PC-9 (cell line): ENCODE measurements at regions of chr4 and their contacts with region 1.

Region 1: GRCh38 chr4:111641955-111642579 is 503.2 kb upstream of the FAM241A start:
- DNase-seq: peak; percentile 68 to 84
- H3K4me3 ChIP-seq: no peak overlapping the region
- H3K27ac ChIP-seq: no peak overlapping the region
- H3K4me1 ChIP-seq: no peaks in the 10 kb centered on the region; the same call in 1 of the 2 replicates
- H3K27me3 ChIP-seq: no peaks in the 10 kb centered on the region
- CTCF ChIP-seq: peak; percentile 84

Region 2: DNA sequence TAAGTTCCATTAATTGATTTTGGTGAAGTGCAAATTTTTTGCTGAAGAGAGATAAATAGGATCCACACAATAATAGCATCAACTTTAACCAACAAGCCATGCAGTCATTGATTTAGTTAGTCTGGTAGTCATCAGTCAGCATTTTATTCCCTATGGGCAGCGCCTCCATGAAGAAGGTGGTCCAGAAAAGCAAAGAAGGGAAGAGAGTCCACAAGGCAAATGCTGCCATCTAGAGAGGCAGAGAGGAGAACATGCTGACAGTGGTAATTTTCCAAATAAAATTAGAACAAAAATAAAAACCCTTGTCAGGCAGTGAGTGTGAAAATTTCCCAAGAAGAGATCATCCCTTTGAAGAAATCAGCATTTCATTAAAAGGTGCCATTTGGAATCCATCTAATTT is 136.5 kb after region 1 on chr4:
- CTCF ChIA-PET with region 1: no interaction called
- POLR2A ChIA-PET with region 1: no interaction called
- intact Hi-C with region 1: loop called (anchors 5 kb)
- DNase-seq: no peak
- H3K4me3 ChIP-seq: no peak overlapping the region
- H3K27ac ChIP-seq: no peak overlapping the region
- H3K4me1 ChIP-seq: peaks cover 18% of the 10 kb centered on the region
- H3K27me3 ChIP-seq: no peaks in the 10 kb centered on the region
- CTCF ChIP-seq: no peak; the same call in 1 of the 2 replicates

Region 3: GRCh38 chr4:111854494-111855087 is 212.5 kb after region 1 on chr4:
- CTCF ChIA-PET with region 1: interaction called, 3 read pairs
- POLR2A ChIA-PET with region 1: interaction called, 3 read pairs
- intact Hi-C with region 1: loop called (anchors 1 kb)
- DNase-seq: peak; percentile 2 to 39
- H3K4me3 ChIP-seq: no peak overlapping the region
- H3K27ac ChIP-seq: no peak overlapping the region
- H3K4me1 ChIP-seq: no peaks in the 10 kb centered on the region
- H3K27me3 ChIP-seq: no peaks in the 10 kb centered on the region
- CTCF ChIP-seq: peak; percentile 87

Region 4: DNA sequence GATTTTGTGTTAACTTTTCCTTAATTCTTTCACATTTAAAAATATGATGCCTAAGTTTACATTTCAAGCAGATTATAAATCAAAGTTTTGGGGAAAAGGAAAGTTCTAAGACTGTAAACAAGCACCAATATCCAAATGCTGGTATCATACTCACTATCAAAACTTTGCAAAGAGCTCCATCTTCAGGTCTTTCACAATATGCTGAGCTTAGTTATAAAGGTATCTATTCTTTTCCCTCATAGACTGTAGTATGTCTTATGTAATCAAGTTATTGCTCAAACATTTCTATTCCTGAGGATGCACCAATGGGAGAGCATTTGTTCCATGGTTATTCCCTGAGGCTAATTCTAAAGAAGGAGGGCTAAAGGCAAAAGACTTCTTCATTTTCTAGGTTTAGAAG is 295.3 kb after region 1 on chr4:
- CTCF ChIA-PET with region 1: no interaction called
- POLR2A ChIA-PET with region 1: no interaction called
- intact Hi-C with region 1: loop called (anchors 1 kb)
- DNase-seq: peak in 1 of 2 experiments; percentile 64
- H3K4me3 ChIP-seq: no peak overlapping the region
- H3K27ac ChIP-seq: no peak overlapping the region
- H3K4me1 ChIP-seq: no peaks in the 10 kb centered on the region
- H3K27me3 ChIP-seq: no peaks in the 10 kb centered on the region
- CTCF ChIP-seq: peak; percentile 62

Region 5: DNA sequence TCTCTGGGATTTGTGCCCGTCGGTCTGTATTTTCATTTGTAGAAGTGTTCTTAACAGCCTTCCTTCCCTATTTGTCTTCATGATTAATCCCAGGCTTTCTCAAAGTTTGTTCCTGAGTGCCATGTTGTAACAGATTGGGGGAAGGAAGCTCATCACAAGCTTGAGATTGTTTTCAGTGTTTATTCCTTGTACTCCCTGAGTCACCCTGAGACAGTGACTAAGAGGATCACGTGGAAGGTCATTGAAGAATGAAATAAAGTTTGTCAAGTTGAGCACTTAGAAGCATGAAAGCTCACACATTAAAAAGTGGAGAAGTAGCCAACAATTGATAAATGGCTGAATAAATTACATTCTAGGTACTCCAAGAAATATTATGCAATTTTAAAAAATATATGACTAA is 349.7 kb after region 1 on chr4:
- CTCF ChIA-PET with region 1: no interaction called
- POLR2A ChIA-PET with region 1: no interaction called
- intact Hi-C with region 1: no loop called
- DNase-seq: no peak
- H3K4me3 ChIP-seq: no peak overlapping the region
- H3K27ac ChIP-seq: no peak overlapping the region
- H3K4me1 ChIP-seq: peaks cover 7% of the 10 kb centered on the region; the same call in 1 of the 2 replicates
- H3K27me3 ChIP-seq: peaks cover 5% of the 10 kb centered on the region; the same call in 1 of the 2 replicates
- CTCF ChIP-seq: no peak

Region 6: GRCh38 chr4:112060212-112060611 is 418.1 kb after region 1 on chr4:
- CTCF ChIA-PET with region 1: no interaction called
- POLR2A ChIA-PET with region 1: interaction called, 3 read pairs
- intact Hi-C with region 1: loop called (anchors 1 kb)
- DNase-seq: peak in 1 of 2 experiments; percentile 5
- H3K4me3 ChIP-seq: no peak overlapping the region
- H3K27ac ChIP-seq: no peak overlapping the region
- H3K4me1 ChIP-seq: no peaks in the 10 kb centered on the region
- H3K27me3 ChIP-seq: no peaks in the 10 kb centered on the region
- CTCF ChIP-seq: peak; percentile 79

Region 7: GRCh38 chr4:112343330-112344080 is 701.4 kb after region 1 on chr4:
- CTCF ChIA-PET with region 1: no interaction called
- POLR2A ChIA-PET with region 1: no interaction called
- intact Hi-C with region 1: no loop called
- DNase-seq: no peak
- H3K4me3 ChIP-seq: no peak overlapping the region
- H3K27ac ChIP-seq: no peak overlapping the region
- H3K4me1 ChIP-seq: no peaks in the 10 kb centered on the region
- H3K27me3 ChIP-seq: no peaks in the 10 kb centered on the region
- CTCF ChIP-seq: no peak